ENCODE measurements at regions of chr4 and their contacts with region 1.

Region 1: GRCh38 chr4:2536193-2537010 is at the start of gene FAM193A:
- DNase-seq: peak; percentile 100
- H3K4me3 ChIP-seq: peak within 1 kb of the TSS; percentile 75 to 98 (median 88)
- H3K27ac ChIP-seq: peak within 1 kb of the TSS; percentile 94 to 98 (median 96)
- H3K4me1 ChIP-seq: peaks cover 0 to 34% (median 29%) of the 10 kb centered on the region in 4 donors
- H3K27me3 ChIP-seq: no peaks in the 10 kb centered on the region
- CTCF ChIP-seq: no peak
- EP300 ChIP-seq: peak in 1 of 4 donors; percentile 39
- POLR2A ChIP-seq: no peak
- total RNA-seq, gene FAM193A: 17.4 to 32.4 (median 20.1) TPM

Region 2: DNA sequence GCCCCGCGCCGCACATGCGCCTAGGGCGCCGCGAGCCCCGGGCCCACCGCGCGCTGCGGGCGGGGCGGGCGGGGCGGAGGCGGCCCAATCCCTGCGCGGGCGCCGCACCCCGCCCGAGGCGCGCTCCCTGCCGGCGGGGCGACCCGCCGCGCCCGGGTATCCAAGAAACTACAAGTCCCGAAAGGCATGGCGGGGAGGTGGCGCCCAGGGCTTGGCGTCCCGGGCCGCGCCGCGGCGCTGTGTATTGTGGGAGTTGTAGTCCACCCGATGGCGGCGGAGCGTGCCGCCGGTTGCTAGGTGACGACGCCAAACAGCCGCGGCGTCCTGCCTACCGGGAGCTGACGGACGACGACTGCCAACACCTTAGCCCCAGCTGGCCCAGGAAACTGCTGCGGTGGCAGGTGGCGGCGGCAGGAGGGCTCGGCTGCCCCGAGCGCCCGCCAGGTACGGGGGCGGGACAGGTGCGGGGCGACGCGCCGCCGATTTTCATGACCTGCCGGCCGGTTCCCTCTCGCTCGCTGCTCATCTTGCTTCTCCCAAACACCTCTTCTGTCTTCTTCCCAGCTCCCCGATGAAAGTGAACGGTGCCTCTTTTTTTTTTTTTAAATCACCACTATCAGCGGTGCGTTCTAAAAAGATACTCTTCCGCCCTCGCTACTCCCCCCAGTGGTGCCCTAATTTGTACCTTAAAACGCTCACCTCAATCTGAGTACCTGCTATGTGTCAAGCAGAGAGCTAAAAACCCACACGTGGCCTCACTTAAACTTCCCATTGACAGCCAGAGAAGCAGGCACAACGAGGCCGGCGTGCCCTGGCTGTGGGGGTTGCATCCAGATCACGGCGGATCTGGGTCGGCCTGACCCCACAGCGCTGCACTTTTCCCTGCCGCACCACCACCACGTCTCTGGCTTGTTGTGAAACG is 117.5 kb before region 1 on chr4 and contains the start of gene CFAP99:
- intact Hi-C with region 1: loop called (anchors 5 kb)
- DNase-seq: peak; percentile 98
- H3K4me3 ChIP-seq: peak within 1 kb of the TSS; percentile 34 to 73 (median 69)
- H3K27ac ChIP-seq: peak within 1 kb of the TSS in 2 of 4 donors; percentile 20 to 43
- H3K4me1 ChIP-seq: peaks cover 0 to 33% (median 29%) of the 10 kb centered on the region in 4 donors
- H3K27me3 ChIP-seq: peaks cover 8 to 84% (median 57%) of the 10 kb centered on the region in 3 donors
- CTCF ChIP-seq: no peak
- EP300 ChIP-seq: no peak
- POLR2A ChIP-seq: no peak
- total RNA-seq, gene CFAP99: not detected

Region 3: DNA sequence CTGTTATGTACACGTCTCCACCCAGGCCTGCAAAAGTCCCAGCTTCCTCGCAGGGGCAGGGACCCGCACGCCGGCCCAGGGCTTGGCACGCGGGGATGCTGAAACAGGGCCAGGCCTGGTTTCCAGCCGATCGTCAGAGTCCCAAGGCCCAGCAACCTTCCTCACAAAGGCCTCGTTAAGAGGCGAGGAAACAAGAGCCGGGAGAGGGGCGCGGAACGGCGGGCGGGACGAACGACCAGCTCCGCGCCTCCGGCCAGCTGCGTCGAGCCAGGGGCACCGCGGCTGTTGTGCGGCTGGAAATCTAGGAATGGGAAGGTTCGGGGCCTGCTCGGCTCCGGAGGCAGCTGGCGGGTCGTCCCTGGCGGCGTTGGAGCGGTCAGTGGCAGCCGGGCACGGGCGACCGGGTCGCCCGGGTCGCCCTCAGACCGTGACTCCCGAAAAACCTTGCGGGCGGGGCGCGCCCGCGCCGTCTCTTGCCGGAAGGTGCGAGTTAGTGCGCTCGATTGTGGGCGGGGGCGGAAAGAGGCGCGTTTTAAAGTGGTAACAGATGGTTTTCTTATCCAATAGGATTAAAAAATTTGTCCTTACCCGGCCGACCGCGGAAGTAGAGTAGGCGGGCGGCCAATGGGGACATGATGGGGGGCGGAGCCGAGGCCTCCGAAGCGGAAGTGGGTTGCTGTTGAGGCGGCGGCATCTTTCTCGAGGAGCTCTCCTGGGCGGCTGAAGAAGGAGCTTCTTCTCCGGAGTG is 67.8 kb before region 1 on chr4 and contains the start of gene RNF4:
- intact Hi-C with region 1: loop called (anchors 2 kb)
- DNase-seq: peak; percentile 98
- H3K4me3 ChIP-seq: peak within 1 kb of the TSS; percentile 84 to 93 (median 86)
- H3K27ac ChIP-seq: peak within 1 kb of the TSS; percentile 89 to 98 (median 94)
- H3K4me1 ChIP-seq: peaks cover 0 to 34% (median 27%) of the 10 kb centered on the region in 4 donors
- H3K27me3 ChIP-seq: no peaks in the 10 kb centered on the region
- CTCF ChIP-seq: no peak
- EP300 ChIP-seq: no peak
- POLR2A ChIP-seq: peak in 1 of 2 donors; percentile 56
- total RNA-seq, gene RNF4: 28.5 to 51.0 (median 40.4) TPM

Region 4: GRCh38 chr4:2552806-2553205 is 16.4 kb after region 1 on chr4:
- intact Hi-C with region 1: loop called (anchors 1 kb)
- DNase-seq: no peak
- H3K4me3 ChIP-seq: no peak overlapping the region
- H3K27ac ChIP-seq: no peak overlapping the region
- H3K4me1 ChIP-seq: peaks cover 0 to 16% (median 2%) of the 10 kb centered on the region in 4 donors
- H3K27me3 ChIP-seq: no peaks in the 10 kb centered on the region
- CTCF ChIP-seq: no peak
- EP300 ChIP-seq: no peak
- POLR2A ChIP-seq: no peak

Region 5: DNA sequence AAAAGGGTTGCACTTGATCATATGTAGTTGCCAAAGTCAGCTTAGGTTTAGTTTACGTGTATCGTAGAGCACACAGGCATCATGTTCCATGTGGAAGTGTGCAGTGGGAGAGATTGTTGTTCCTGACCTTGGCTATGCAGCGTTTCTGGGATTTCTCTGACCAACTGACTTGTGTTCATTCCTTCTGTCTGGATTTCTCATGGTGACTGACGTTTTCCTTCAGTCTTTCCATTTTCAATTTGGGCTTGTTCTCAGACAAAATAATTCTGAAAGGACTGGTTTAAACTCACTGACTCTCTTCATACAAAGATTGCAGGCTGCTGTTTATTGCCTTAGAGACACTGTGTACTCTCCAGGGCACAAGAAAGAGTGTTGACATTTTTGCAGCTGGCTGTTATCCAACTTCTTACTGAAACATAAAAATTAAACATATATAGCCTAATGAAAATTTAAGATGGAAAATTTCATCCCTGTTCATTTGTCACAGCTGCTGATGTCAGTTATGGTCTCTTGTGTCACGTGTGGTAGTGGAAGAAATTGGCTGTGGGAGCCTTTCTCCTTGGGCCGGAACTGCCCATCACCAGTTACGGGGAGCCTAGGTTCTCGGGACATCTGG is 124.3 kb after region 1 on chr4:
- intact Hi-C with region 1: loop called (anchors 2 kb)
- DNase-seq: peak; percentile 76
- H3K4me3 ChIP-seq: no peak overlapping the region
- H3K27ac ChIP-seq: peak overlapping the region; percentile 62 to 84 (median 80)
- H3K4me1 ChIP-seq: peaks cover 0 to 32% (median 30%) of the 10 kb centered on the region in 4 donors
- H3K27me3 ChIP-seq: no peaks in the 10 kb centered on the region
- CTCF ChIP-seq: no peak
- EP300 ChIP-seq: peak in 2 of 4 donors; percentile 34 to 59
- POLR2A ChIP-seq: no peak

Region 6: DNA sequence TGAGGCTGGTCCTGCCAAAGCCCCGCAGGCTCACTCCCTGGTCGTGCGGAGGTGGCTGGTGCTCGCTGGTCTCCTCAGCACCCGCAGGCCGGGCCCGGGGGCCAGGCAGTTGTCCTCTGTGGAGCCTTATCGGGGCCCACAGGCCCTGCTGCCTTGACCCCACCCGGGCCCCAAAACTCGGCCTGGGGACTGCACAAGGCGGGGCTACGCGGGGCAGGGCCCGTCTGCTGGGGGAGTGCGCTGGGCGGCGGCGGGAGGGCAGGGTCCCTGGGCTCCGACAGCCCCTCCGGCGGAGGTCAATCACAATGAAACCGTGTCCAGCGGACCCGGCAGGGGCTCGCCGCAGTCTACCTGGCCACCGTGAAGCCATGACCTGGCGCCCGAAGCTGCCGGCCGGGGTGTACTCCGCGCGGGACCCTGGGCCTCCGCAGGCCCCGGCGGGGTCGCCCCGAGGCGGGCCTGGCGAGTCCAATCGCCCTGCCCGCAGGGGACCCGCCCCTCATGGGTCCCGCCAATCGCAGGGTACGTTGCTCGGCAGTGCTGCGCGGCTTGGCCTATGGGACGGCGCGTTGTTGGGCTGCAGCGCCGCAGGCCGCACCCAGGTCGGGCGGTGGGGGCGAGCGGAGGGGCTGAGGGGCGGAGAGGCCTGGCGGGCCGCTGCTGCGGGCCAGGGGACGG is 307.0 kb after region 1 on chr4 and contains the start of gene ADD1:
- intact Hi-C with region 1: loop called (anchors 10 kb)
- DNase-seq: peak; percentile 96
- H3K4me3 ChIP-seq: peak within 1 kb of the TSS; percentile 86 to 95 (median 90)
- H3K27ac ChIP-seq: peak within 1 kb of the TSS; percentile 93 to 99 (median 96)
- H3K4me1 ChIP-seq: peaks cover 0 to 52% (median 42%) of the 10 kb centered on the region in 4 donors
- H3K27me3 ChIP-seq: no peaks in the 10 kb centered on the region
- CTCF ChIP-seq: no peak
- EP300 ChIP-seq: peak in 1 of 4 donors; percentile 8
- POLR2A ChIP-seq: peak; percentile 81 to 90
- total RNA-seq, gene ADD1: 166 to 378 (median 183) TPM

Region 7: DNA sequence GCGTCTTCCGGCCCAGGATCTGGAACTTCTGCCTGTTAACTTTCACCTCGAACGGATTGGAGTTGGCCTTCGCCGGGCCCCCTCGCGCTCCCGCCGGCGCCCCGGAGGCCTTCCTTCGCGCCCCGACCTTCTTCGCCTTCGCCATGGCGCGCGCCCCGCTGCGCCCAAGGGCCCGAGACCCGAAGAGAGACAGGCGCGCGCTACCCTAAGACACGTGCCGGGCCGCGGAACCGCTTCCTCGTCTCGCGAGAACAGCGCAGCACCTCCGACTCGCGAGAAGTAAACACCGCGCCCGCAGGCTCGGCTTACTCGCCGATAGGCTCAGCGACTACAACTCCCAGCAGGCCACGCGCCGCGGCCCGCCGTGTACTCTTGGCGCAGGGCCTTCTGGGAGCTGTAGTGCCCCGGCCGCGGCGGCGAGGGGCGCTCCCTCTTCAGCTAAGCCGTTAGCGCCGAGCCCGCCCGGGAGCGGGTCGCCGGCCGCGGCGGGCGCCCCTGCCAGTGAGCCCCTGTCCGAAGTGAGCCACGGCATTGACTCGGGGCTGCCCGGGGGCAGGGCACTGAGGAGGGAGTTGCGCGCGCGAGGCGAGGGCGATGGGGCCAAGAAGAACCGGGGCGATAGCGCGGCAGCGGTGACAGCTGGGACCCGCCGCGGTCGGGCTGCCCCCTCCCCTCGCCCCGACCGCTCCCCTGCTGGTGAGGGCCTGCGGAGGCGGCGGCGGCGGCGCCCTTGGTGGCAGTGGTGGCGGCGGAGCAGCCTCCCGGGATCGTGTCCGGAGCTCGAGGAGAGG is 427.0 kb after region 1 on chr4 and contains the starts of genes GRK4 and NOP14:
- intact Hi-C with region 1: loop called (anchors 2 kb)
- DNase-seq: peak; percentile 99
- H3K4me3 ChIP-seq: peak within 1 kb of the TSS; percentile 85 to 98 (median 90)
- H3K27ac ChIP-seq: peak within 1 kb of the TSS; percentile 83 to 92 (median 86)
- H3K4me1 ChIP-seq: peaks cover 0 to 29% (median 24%) of the 10 kb centered on the region in 4 donors
- H3K27me3 ChIP-seq: no peaks in the 10 kb centered on the region
- CTCF ChIP-seq: peak in 1 of 4 experiments; percentile 26
- EP300 ChIP-seq: peak in 1 of 4 donors; percentile 41
- POLR2A ChIP-seq: peak in 1 of 2 donors; percentile 18
- total RNA-seq, gene GRK4: 3.9 to 10.2 (median 6.7) TPM
- total RNA-seq, gene NOP14: 12.5 to 19.1 (median 15.1) TPM